WTC11 (cell line): ENCODE measurements at regions of chr17 and their contacts with region 1.

Region 1: DNA sequence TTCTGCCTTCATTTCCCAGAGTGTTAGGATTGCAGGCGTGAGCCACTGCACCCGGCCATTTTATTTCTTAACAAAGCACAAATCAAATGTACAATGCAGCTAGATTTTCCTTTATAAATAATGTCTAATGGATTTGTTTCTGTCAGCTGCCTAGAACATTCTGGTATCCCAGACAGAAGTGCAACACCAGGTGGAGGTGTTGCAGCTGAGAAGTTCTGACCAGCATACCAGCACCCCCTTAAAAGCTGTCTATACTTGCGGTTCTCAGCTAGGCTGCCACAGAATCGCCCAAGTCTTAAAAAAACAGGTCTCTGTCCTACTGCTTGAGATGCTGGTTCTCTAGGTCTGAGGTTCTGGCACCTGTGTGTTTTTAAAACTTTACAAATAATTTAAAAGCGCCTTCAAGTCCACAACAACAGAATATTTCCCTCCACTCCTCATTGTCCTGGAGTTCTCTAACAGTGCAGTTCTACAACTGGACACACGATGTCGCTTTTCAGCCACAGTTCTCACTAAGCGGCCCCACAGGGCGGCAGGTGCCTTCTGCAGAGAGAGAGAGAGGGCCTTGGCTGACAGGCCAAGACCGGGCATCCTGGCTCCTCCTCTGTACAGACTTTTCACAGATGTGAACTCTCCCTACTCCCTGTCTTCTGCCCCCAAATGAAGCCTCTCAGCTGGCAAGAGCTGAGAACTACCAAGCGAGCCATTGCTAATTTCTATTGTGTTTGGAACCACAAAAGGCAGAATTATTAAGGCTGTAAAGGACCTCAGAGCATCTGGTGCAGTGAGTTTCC is 32.6 kb upstream of the MEOX1 start:
- DNase-seq: peak; percentile 86
- ATAC-seq: peak; percentile 91
- H3K4me3 Mint-ChIP-seq: no peak overlapping the region
- H3K27ac Mint-ChIP-seq: no peak overlapping the region
- H3K4me1 Mint-ChIP-seq: peaks cover 17% of the 10 kb centered on the region
- H3K27me3 Mint-ChIP-seq: 0 out of 2 replicates have a peak, but pooled peaks cover 2% of the 10 kb centered on the region
- CTCF ChIP-seq: peak; percentile 81

Region 2: GRCh38 chr17:43576563-43577229 is 117.6 kb before region 1 on chr17:
- CTCF ChIA-PET with region 1: interaction called, 70 read pairs
- POLR2A ChIA-PET with region 1: no interaction called
- DNase-seq: peak; percentile 85
- ATAC-seq: peak; percentile 83
- H3K4me3 Mint-ChIP-seq: peak overlapping the region; percentile 51
- H3K27ac Mint-ChIP-seq: no peak overlapping the region
- H3K4me1 Mint-ChIP-seq: peaks cover 36% of the 10 kb centered on the region
- H3K27me3 Mint-ChIP-seq: no peaks in the 10 kb centered on the region
- CTCF ChIP-seq: peak; percentile 89

Region 3: DNA sequence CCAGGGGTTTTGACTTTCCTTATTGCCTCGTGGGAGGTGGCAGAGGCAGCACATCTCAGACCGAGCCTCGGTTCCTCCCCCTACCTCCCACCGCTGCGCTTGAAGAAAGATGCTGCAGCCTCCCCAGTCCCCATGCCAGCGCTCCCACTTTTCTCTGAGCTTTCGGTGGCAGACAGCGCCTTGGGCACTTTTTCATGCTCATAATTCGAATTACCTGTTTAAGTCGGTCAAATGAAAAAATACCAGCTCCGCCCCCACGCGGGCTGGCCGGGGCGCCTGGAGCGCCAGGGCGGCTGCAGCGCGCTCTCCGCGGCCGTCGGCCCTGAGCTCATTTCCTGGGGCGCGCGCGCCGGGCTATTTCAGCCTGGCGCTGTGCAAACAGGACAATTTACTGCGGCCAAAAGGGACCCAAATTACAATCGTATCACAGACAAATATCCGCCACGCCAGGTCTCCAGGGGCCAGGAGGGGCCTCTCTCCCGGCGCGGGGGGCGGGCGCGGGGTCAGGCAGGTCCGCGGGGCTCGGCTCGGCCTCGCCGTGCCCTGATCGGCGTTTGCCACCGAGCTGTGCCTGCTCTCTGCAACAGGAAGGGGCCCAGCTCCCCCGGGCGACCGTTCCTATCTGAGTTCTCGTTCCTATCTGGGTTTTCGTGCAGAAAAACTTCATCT is 19.4 kb after region 1 on chr17:
- CTCF ChIA-PET with region 1: interaction called, 11 read pairs
- POLR2A ChIA-PET with region 1: no interaction called
- DNase-seq: peak; percentile 52
- ATAC-seq: peak; percentile 78
- H3K4me3 Mint-ChIP-seq: peak overlapping the region; percentile 66
- H3K27ac Mint-ChIP-seq: no peak overlapping the region
- H3K4me1 Mint-ChIP-seq: peaks cover 20% of the 10 kb centered on the region
- H3K27me3 Mint-ChIP-seq: peaks cover 65% of the 10 kb centered on the region
- CTCF ChIP-seq: no peak